Activated T-helper 1 cell treated with anti-CD3 and anti-CD28 coated beads, Interleukin-12 subunit alpha, Interleukin-12 subunit beta, Interleukin-2, Interleukin-4 antibody, amounts not matched to agents 30 ng/mL and 10 ng/mL and 1 ng/mL, durations not matched to agents 14 hours and 24 hours and 36 hours (primary cell): ENCODE measurements at regions of chr16 and their contacts with region 1.

Region 1: GRCh38 chr16:30698139-30698815 is 694 bp upstream of the SRCAP start:
- DNase-seq: peak; percentile 99
- H3K4me3 Mint-ChIP-seq: peak overlapping the region; percentile 99
- H3K27ac Mint-ChIP-seq: peak overlapping the region; percentile 99
- H3K4me1 Mint-ChIP-seq: peaks cover 42% of the 10 kb centered on the region
- H3K27me3 Mint-ChIP-seq: peaks cover 2% of the 10 kb centered on the region

Region 2: GRCh38 chr16:30526823-30527635 is 171.2 kb before region 1 on chr16:
- intact Hi-C with region 1: loop called (anchors 2 kb)
- DNase-seq: peak; percentile 93
- H3K4me3 Mint-ChIP-seq: peak overlapping the region; percentile 84
- H3K27ac Mint-ChIP-seq: peak overlapping the region; percentile 54
- H3K4me1 Mint-ChIP-seq: peaks cover 46% of the 10 kb centered on the region
- H3K27me3 Mint-ChIP-seq: no peaks in the 10 kb centered on the region

Region 3: GRCh38 chr16:30628627-30629540 is 69.4 kb before region 1 on chr16:
- intact Hi-C with region 1: loop called (anchors 1 kb)
- DNase-seq: peak; percentile 77
- H3K4me3 Mint-ChIP-seq: peak overlapping the region; percentile 52
- H3K27ac Mint-ChIP-seq: peak overlapping the region; percentile 71
- H3K4me1 Mint-ChIP-seq: peaks cover 10% of the 10 kb centered on the region
- H3K27me3 Mint-ChIP-seq: no peaks in the 10 kb centered on the region

Region 4: DNA sequence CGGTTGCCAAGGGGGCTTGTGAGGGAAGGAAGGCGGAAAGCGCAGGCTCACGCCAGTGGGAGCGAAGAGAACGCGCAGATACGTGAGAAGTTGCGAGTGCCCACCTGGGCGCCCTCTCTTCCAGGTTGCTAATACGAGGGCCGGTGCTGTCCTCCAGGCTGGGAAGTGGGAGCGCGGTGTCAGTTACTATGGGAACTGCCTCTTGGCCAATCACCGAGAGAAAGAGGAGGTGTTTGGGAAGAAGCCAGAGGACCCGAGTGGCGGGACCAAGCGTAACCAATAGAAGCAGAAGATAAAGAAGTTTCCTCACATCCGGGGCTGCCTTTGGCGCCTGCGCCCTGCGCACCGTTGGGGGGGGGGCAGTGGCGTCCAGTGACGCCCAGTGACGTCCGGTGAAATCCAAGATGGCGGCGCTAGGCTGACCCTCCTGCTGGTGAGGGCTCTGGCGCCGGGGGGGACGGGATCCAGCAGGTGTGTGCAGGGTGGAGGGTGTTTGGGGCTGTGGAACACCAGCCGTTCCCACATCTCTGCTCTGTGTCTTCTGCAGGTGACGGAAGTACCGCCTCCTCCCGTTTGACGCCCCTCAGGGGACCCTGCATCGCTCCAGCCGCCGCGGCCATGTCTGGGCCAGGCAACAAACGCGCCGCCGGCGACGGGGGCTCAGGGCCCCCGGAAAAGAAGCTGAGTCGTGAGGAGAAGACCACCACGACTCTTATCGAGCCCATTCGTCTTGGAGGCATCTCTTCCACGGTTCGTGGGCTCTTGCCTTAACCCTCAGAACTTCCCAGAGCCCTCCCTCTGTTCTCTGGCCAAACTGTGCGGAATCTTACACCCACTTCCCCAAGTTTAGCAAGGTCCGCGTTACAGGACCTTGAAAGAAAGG is 63.9 kb after region 1 on chr16 and contains the starts of genes CFAP119 and RNF40:
- intact Hi-C with region 1: loop called (anchors 1 kb)
- DNase-seq: peak; percentile 95
- H3K4me3 Mint-ChIP-seq: peak within 1 kb of the TSS; percentile 93
- H3K27ac Mint-ChIP-seq: peak within 1 kb of the TSS; percentile 82
- H3K4me1 Mint-ChIP-seq: peaks cover 28% of the 10 kb centered on the region
- H3K27me3 Mint-ChIP-seq: no peaks in the 10 kb centered on the region
- total RNA-seq, gene CFAP119: 4.4 and 5.6 TPM in 2 replicates
- total RNA-seq, gene RNF40: 98.2 and 98.5 TPM in 2 replicates

Region 5: GRCh38 chr16:30893744-30894539 is 195.7 kb after region 1 on chr16 and contains the start of gene BCL7C:
- intact Hi-C with region 1: loop called (anchors 1 kb)
- DNase-seq: peak; percentile 86
- H3K4me3 Mint-ChIP-seq: peak within 1 kb of the TSS; percentile 92
- H3K27ac Mint-ChIP-seq: peak within 1 kb of the TSS; percentile 78
- H3K4me1 Mint-ChIP-seq: peaks cover 39% of the 10 kb centered on the region
- H3K27me3 Mint-ChIP-seq: no peaks in the 10 kb centered on the region
- total RNA-seq, gene BCL7C: 23.1 and 25.3 TPM in 2 replicates